Naive thymus-derived CD4-positive, alpha-beta T cell (primary cell): ENCODE measurements at regions of chr18 and their contacts with region 1.

Region 1: DNA sequence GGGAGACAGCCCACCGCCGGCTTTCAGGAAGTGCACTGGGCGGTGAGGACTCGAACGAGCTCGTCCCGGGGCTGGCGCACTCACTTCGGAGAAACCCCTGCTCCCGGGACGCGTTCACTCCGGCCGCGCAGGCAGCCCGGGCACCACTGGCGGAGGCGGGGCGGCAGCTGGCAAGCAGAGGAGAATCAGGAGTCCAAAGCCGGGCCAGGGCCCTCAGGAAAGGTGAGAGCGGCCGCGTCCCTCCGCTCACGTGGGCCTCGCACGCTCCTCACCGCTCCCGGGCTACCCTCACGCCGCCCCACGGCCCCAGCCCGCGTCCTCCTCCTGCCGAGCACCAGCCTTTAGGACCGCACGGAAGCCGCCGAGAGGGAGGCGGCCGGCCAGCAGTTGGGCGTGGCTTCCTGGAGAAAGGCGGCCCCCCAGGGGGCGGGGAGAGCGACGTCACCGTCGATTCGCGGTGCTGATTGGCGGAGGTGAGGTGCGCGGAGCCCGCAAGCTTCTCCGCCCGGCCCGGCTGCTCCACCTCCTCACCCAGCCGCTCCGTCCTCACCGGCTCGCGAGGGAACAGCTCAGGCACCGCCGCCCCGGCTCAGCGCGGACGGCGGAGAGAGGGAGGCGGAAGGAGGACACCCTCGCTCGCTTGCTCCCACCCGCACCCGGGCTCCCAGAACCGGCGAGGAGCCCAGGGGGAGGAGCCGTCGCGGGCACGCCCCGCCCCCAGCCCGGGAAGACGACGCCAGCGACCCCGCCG is at the start of gene ZCCHC2:
- DNase-seq: peak; percentile 96 to 100 (median 99)
- ATAC-seq: peak; percentile 88
- H3K4me3 ChIP-seq: peak within 1 kb of the TSS; percentile 81
- H3K4me3 Mint-ChIP-seq: peak within 1 kb of the TSS; percentile 91 to 98 (median 96)
- H3K27ac ChIP-seq: peak within 1 kb of the TSS; percentile 88
- H3K27ac Mint-ChIP-seq: peak within 1 kb of the TSS; percentile 62 to 97 (median 93)
- H3K4me1 ChIP-seq: peaks cover 23 to 26% of the 10 kb centered on the region in 2 donors
- H3K4me1 Mint-ChIP-seq: peaks cover 21 to 44% (median 37%) of the 10 kb centered on the region in 7 donors
- H3K27me3 ChIP-seq: no peaks in the 10 kb centered on the region
- H3K27me3 Mint-ChIP-seq: no peaks in the 10 kb centered on the region
- total RNA-seq, gene ZCCHC2: 51.1 to 68.5 (median 63.1) TPM

Region 2: GRCh38 chr18:62324917-62325805 is 197.5 kb before region 1 on chr18 and contains the start of gene TNFRSF11A:
- CTCF ChIA-PET with region 1: no interaction called
- POLR2A ChIA-PET with region 1: no interaction called
- intact Hi-C with region 1: loop called (anchors 1 to 5 kb)
- DNase-seq: peak; percentile 19 to 83 (median 46)
- ATAC-seq: peak; percentile 91
- H3K4me3 ChIP-seq: peak within 1 kb of the TSS; percentile 50
- H3K4me3 Mint-ChIP-seq: peak within 1 kb of the TSS; percentile 80 to 93 (median 84)
- H3K27ac ChIP-seq: no peak within 1 kb of the TSS
- H3K27ac Mint-ChIP-seq: peak within 1 kb of the TSS in 5 of 9 donors; percentile 15 to 73 (median 65)
- H3K4me1 ChIP-seq: peaks cover 14 to 17% of the 10 kb centered on the region in 2 donors
- H3K4me1 Mint-ChIP-seq: peaks cover 18 to 53% (median 34%) of the 10 kb centered on the region in 7 donors
- H3K27me3 ChIP-seq: peaks cover 12 to 20% of the 10 kb centered on the region in 2 donors
- H3K27me3 Mint-ChIP-seq: peaks cover 46 to 78% (median 70%) of the 10 kb centered on the region in 5 donors
- total RNA-seq, gene TNFRSF11A: 0.16 to 22.2 (median 0.68) TPM

Region 3: DNA sequence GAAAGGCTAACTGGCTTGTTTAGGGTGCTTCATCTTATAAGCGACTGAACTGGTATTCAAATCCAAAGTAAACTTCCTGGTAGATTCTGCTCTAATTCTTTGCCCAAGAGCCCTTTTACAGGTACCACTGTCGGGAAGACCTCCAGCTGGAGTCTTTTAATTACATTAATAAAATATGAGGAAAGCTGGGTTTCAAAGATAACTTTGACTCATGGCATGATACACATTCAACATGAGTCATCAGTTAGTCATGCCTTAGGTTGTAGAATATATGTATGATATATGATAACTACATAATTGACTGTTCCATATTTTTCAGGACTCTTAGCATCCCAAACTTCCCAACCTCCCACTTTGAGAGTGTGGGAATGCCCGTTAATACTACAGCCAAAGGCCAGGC is 32.5 kb after region 1 on chr18:
- CTCF ChIA-PET with region 1: no interaction called
- POLR2A ChIA-PET with region 1: interaction called, 3 read pairs
- intact Hi-C with region 1: loop called in 1 of 2 experiments (anchors 2 kb)
- DNase-seq: no peak
- ATAC-seq: no peak
- H3K4me3 ChIP-seq: no peak overlapping the region
- H3K4me3 Mint-ChIP-seq: no peak overlapping the region
- H3K27ac ChIP-seq: no peak overlapping the region
- H3K27ac Mint-ChIP-seq: no peak overlapping the region
- H3K4me1 ChIP-seq: no peaks in the 10 kb centered on the region
- H3K4me1 Mint-ChIP-seq: peaks cover 11 to 36% (median 22%) of the 10 kb centered on the region in 7 donors
- H3K27me3 ChIP-seq: no peaks in the 10 kb centered on the region
- H3K27me3 Mint-ChIP-seq: no peaks in the 10 kb centered on the region

Region 4: GRCh38 chr18:62566199-62566598 is 43.5 kb after region 1 on chr18:
- CTCF ChIA-PET with region 1: no interaction called
- POLR2A ChIA-PET with region 1: no interaction called
- intact Hi-C with region 1: no loop called
- DNase-seq: peak in 2 of 9 donors; percentile 3 to 11
- ATAC-seq: peak; percentile 52
- H3K4me3 ChIP-seq: no peak overlapping the region
- H3K4me3 Mint-ChIP-seq: no peak overlapping the region
- H3K27ac ChIP-seq: no peak overlapping the region
- H3K27ac Mint-ChIP-seq: peak overlapping the region in 3 of 9 donors; percentile 13 to 63 (median 51)
- H3K4me1 ChIP-seq: no peaks in the 10 kb centered on the region
- H3K4me1 Mint-ChIP-seq: peaks cover 0 to 8% (median 3%) of the 10 kb centered on the region in 7 donors
- H3K27me3 ChIP-seq: no peaks in the 10 kb centered on the region
- H3K27me3 Mint-ChIP-seq: no peaks in the 10 kb centered on the region

Region 5: DNA sequence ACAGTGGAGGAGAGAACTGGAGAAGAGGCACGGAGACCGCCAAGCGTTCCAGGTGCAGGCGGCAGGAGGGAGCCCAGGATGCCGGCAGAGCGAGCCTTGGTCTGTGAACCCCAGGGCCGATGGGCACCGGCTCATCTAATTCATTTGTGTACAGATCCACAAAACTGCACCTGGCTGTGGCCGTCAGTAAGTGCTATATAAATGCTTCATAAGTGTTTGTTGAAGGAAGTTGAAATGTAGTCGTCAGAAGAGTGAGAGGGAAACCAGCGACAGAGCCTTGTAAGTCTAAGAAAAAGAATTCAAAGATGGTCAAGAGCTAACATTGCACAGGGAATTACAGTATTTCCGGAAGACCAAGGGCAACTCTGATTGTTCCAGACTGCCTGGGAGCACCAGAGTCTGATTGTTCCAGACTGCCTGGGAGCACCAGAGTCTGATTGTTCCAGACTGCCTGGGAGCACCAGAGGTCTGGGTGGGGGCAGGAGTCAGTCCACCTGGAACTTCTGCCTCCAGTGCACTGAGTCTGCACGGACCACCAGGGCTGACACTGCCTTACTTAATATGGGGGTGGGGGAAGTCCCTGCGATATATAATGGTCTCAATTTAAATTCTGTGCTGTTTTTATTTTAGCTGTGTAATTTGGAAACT is 684.6 kb after region 1 on chr18:
- CTCF ChIA-PET with region 1: no interaction called
- POLR2A ChIA-PET with region 1: no interaction called
- intact Hi-C with region 1: loop called in 1 of 2 experiments (anchors 5 kb)
- DNase-seq: no peak
- ATAC-seq: peak; percentile 46
- H3K4me3 ChIP-seq: peak overlapping the region; percentile 40
- H3K4me3 Mint-ChIP-seq: peak overlapping the region; percentile 72 to 94 (median 81)
- H3K27ac ChIP-seq: peak overlapping the region; percentile 63
- H3K27ac Mint-ChIP-seq: peak overlapping the region; percentile 77 to 96 (median 92)
- H3K4me1 ChIP-seq: peaks cover 58 to 97% of the 10 kb centered on the region in 2 donors
- H3K4me1 Mint-ChIP-seq: peaks cover 77 to 100% (median 95%) of the 10 kb centered on the region in 7 donors
- H3K27me3 ChIP-seq: no peaks in the 10 kb centered on the region
- H3K27me3 Mint-ChIP-seq: no peaks in the 10 kb centered on the region

Region 6: DNA sequence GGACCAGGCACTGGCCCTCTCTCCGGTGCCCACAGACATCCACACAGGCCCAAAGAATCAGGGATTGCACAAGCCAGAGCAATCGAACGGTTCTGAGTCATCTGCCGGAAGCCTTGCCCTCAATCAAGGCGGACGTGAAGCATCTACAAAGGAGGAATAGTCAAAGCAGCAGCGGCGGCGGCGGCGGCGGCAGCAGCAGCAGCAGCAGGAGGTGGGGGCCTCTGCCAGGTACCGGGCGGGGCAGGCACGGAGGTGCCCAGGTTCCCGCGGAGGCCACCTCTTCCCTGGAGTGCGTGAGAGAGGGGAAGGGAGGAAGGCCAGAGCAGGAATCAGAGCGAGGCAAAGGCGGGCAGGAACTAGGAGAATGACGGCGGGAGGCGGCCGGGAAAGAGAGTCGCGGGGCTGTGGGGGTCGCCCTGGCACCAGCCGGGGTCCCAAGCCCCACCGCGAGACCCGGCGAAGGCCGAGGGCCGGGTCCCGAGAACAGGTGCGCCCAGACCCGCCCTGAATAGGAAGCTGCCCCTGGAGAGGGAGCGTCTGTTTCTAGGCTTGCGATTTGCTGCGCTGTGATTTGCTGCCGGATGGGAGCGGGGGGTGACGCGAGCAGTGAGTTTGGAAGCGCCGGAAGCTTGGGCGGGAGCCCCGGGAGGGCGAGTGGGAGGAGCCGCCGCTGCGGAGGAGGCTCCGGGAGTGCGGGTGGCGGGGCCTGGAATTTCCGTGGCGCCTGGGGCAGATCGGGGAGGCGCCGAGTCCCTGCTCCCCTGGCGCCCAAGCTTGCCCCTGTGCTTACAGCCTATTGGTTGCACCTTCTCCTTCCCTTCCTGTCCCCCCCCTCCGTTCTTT is 1447.5 kb after region 1 on chr18 and contains the start of gene SERPINB8:
- CTCF ChIA-PET with region 1: no interaction called
- POLR2A ChIA-PET with region 1: no interaction called
- intact Hi-C with region 1: loop called (anchors 1 to 2 kb)
- DNase-seq: peak; percentile 44 to 84 (median 77)
- ATAC-seq: peak; percentile 89
- H3K4me3 ChIP-seq: peak within 1 kb of the TSS; percentile 93
- H3K4me3 Mint-ChIP-seq: peak within 1 kb of the TSS; percentile 88 to 98 (median 94)
- H3K27ac ChIP-seq: peak within 1 kb of the TSS; percentile 96
- H3K27ac Mint-ChIP-seq: peak within 1 kb of the TSS; percentile 92 to 97 (median 94)
- H3K4me1 ChIP-seq: peaks cover 13% of the 10 kb centered on the region in 2 donors
- H3K4me1 Mint-ChIP-seq: peaks cover 26 to 42% (median 31%) of the 10 kb centered on the region in 7 donors
- H3K27me3 ChIP-seq: no peaks in the 10 kb centered on the region
- H3K27me3 Mint-ChIP-seq: peaks cover 0 to 25% (median 1%) of the 10 kb centered on the region in 5 donors
- total RNA-seq, gene SERPINB8: 9.2 to 15.7 (median 10.0) TPM